MCF 10A (cell line): ENCODE measurements at regions of chr11 and their contacts with region 1.

Region 1: GRCh38 chr11:57324886-57325734 is at the start of gene TNKS1BP1:
- DNase-seq: peak; percentile 98
- H3K4me3 Mint-ChIP-seq: peak within 1 kb of the TSS; percentile 75
- H3K27ac Mint-ChIP-seq: peak within 1 kb of the TSS; percentile 97
- H3K4me1 Mint-ChIP-seq: peaks cover 48% of the 10 kb centered on the region
- H3K27me3 Mint-ChIP-seq: no peaks in the 10 kb centered on the region
- CTCF ChIP-seq: no peak
- total RNA-seq, gene TNKS1BP1: 198 and 202 TPM in 2 replicates

Region 2: GRCh38 chr11:57277845-57278709 is 47.0 kb before region 1 on chr11:
- CTCF ChIA-PET with region 1: interaction called, 4 read pairs
- POLR2A ChIA-PET with region 1: interaction called, 72 read pairs
- intact Hi-C with region 1: loop called (anchors 1 kb)
- DNase-seq: peak; percentile 86
- H3K4me3 Mint-ChIP-seq: peak overlapping the region; percentile 49
- H3K27ac Mint-ChIP-seq: peak overlapping the region; percentile 83
- H3K4me1 Mint-ChIP-seq: peaks cover 44% of the 10 kb centered on the region
- H3K27me3 Mint-ChIP-seq: no peaks in the 10 kb centered on the region
- CTCF ChIP-seq: peak; percentile 62

Region 3: DNA sequence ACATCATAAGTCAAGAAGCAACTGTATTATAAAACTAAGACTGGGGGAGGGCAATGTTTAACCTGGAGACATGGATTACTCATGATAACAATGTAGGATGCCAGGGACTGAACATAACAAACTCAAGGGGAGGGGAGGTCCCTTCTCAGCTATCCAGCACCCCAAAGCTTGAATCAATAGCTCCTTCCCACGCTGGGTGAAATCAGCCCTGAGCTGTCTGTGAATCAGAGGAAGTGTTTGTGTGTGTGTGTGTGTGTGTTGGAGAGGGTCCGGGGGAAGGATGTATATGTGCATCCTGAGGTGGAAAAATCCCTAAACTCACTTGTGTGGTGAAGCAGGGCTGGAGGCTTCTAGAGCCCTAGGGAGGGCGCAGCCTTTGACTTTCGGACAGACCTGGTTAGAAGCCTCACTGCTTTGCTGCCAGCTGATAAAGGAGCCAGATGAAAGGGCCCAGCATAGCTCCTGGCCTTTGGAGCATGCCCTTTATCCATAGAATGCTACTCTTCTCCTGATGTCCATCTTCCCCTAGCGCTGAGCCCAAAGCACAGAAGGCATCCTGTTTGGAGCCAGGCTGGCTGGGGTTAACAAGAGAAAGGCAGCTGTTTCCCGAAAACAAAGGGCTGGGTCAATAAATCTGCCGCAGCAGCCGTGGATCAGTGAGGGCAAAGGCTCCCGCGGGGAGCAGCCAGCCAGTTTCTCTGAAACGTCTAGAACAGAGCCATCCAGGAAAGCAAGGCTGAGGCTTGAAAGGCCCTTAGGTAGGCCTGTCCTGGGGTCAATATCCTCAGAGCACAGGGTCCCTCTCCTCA is 36.1 kb before region 1 on chr11:
- CTCF ChIA-PET with region 1: interaction called, 27 read pairs
- POLR2A ChIA-PET with region 1: interaction called, 193 read pairs
- intact Hi-C with region 1: loop called (anchors 1 kb)
- DNase-seq: peak; percentile 47
- H3K4me3 Mint-ChIP-seq: no peak overlapping the region
- H3K27ac Mint-ChIP-seq: peak overlapping the region; percentile 54
- H3K4me1 Mint-ChIP-seq: peaks cover 20% of the 10 kb centered on the region
- H3K27me3 Mint-ChIP-seq: no peaks in the 10 kb centered on the region
- CTCF ChIP-seq: no peak

Region 4: GRCh38 chr11:57294605-57295131 is 30.4 kb before region 1 on chr11:
- CTCF ChIA-PET with region 1: interaction called, 27 read pairs
- POLR2A ChIA-PET with region 1: interaction called, 193 read pairs
- intact Hi-C with region 1: loop called (anchors 1 kb)
- DNase-seq: peak; percentile 82
- H3K4me3 Mint-ChIP-seq: peak overlapping the region; percentile 31
- H3K27ac Mint-ChIP-seq: peak overlapping the region; percentile 90
- H3K4me1 Mint-ChIP-seq: peaks cover 38% of the 10 kb centered on the region
- H3K27me3 Mint-ChIP-seq: no peaks in the 10 kb centered on the region
- CTCF ChIP-seq: no peak

Region 5: GRCh38 chr11:57303990-57304579 is 21.0 kb before region 1 on chr11:
- CTCF ChIA-PET with region 1: interaction called, 9 read pairs
- POLR2A ChIA-PET with region 1: interaction called, 362 read pairs
- intact Hi-C with region 1: loop called (anchors 2 kb)
- DNase-seq: peak; percentile 85
- H3K4me3 Mint-ChIP-seq: peak overlapping the region; percentile 63
- H3K27ac Mint-ChIP-seq: peak overlapping the region; percentile 68
- H3K4me1 Mint-ChIP-seq: peaks cover 44% of the 10 kb centered on the region
- H3K27me3 Mint-ChIP-seq: no peaks in the 10 kb centered on the region
- CTCF ChIP-seq: no peak

Region 6: GRCh38 chr11:57311109-57311936 is 13.8 kb before region 1 on chr11:
- CTCF ChIA-PET with region 1: interaction called, 24 read pairs
- POLR2A ChIA-PET with region 1: interaction called, 362 read pairs
- intact Hi-C with region 1: loop called (anchors 1 kb)
- DNase-seq: peak; percentile 97
- H3K4me3 Mint-ChIP-seq: peak overlapping the region; percentile 80
- H3K27ac Mint-ChIP-seq: peak overlapping the region; percentile 95
- H3K4me1 Mint-ChIP-seq: peaks cover 49% of the 10 kb centered on the region
- H3K27me3 Mint-ChIP-seq: no peaks in the 10 kb centered on the region
- CTCF ChIP-seq: no peak

Region 7: GRCh38 chr11:57335343-57336110 is 10.4 kb after region 1 on chr11 and contains the start of gene SSRP1:
- CTCF ChIA-PET with region 1: interaction called, 4 read pairs
- POLR2A ChIA-PET with region 1: interaction called, 89 read pairs
- intact Hi-C with region 1: no loop called
- DNase-seq: peak; percentile 83
- H3K4me3 Mint-ChIP-seq: peak within 1 kb of the TSS; percentile 82
- H3K27ac Mint-ChIP-seq: peak within 1 kb of the TSS; percentile 95
- H3K4me1 Mint-ChIP-seq: peaks cover 20% of the 10 kb centered on the region
- H3K27me3 Mint-ChIP-seq: no peaks in the 10 kb centered on the region
- CTCF ChIP-seq: no peak
- total RNA-seq, gene SSRP1: 159 and 229 TPM in 2 replicates

Region 8: DNA sequence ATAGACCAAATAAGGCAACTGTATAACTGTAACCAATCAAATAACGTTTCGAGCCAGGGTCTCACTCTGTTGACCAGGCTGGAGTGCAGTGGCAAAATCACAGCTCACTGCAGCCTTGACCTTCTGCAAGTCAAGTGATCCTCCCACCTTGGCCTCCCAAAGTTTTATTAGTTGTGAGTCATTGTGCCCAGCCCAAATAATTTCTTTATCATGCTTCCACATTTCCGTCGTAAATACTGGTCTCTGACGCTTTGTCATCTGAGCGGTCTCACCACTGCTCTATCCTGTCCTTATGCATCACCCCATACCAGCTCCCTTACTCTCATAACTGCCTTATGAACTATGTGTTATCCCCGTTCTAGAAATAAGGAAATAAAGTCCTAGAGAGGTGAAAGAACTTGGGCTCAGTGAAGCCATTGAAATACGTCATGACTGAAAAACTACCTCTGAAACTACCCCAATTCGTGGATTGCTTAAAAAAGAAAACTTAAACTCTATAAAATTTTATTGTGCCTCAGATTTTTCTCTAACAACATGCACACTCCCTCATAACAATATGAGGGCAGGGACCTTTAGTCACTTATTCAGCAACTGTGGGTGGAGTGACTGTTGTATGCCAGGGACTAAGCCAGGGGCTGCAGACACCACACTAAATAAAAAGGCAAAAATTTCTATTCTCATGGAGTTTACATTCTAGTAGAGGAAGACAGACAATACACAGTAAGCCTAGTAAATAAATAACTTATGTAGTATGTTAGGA is 119.4 kb after region 1 on chr11:
- CTCF ChIA-PET with region 1: no interaction called
- POLR2A ChIA-PET with region 1: no interaction called
- intact Hi-C with region 1: no loop called
- DNase-seq: no peak
- H3K4me3 Mint-ChIP-seq: no peak overlapping the region
- H3K27ac Mint-ChIP-seq: no peak overlapping the region
- H3K4me1 Mint-ChIP-seq: no peaks in the 10 kb centered on the region
- H3K27me3 Mint-ChIP-seq: peaks cover 10% of the 10 kb centered on the region
- CTCF ChIP-seq: no peak